Activated B cell treated with CpG ODN at 0.5 μM for 24 hours (primary cell): ENCODE measurements at regions of chr12 and their contacts with region 1.

Region 1: DNA sequence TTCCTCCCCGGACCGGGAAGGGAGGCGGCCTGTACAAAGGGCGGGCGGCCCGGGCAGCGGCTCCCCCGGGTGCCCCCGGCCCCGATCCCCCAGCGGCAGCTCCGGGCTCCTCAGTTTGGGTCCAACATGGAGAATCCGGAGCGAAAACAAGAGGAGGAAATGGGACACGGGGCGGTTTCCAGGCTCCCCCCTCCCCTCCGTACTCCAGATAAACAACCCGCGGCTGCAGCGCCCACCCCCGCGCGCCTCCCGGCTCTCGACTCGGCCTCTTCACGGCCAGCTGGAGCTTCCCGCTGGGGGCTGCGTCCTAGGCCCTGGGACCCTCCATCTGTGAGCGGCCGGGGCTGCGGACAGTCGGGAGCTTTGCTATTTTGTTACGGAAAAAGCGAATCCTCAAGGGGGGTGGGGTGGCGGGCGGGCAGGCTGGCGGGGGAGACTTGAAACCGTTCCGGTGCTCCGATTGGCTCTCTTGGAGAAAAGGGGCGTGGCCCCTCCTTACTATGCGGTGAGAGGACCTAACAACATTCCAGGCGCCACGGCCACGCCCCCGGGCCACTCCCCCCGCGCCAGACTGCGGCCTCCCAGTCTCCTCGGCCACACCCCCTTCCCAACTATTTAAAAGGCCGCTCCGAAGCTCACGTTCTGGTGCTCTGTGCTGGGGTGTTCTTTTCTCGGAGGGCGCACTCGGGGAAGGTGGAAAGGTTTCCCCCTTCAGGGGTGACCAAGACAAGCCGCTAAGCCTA is at the start of gene CTDSP2:
- DNase-seq: peak; percentile 81
- ATAC-seq: peak; percentile 47
- H3K4me3 Mint-ChIP-seq: peak within 1 kb of the TSS; percentile 86
- H3K27ac Mint-ChIP-seq: peak within 1 kb of the TSS; percentile 85
- H3K4me1 Mint-ChIP-seq: peaks cover 45% of the 10 kb centered on the region
- H3K27me3 Mint-ChIP-seq: peaks cover 8% of the 10 kb centered on the region
- CTCF ChIP-seq: no peak
- total RNA-seq, gene CTDSP2: 73.2 and 81.5 TPM in 2 replicates

Region 2: DNA sequence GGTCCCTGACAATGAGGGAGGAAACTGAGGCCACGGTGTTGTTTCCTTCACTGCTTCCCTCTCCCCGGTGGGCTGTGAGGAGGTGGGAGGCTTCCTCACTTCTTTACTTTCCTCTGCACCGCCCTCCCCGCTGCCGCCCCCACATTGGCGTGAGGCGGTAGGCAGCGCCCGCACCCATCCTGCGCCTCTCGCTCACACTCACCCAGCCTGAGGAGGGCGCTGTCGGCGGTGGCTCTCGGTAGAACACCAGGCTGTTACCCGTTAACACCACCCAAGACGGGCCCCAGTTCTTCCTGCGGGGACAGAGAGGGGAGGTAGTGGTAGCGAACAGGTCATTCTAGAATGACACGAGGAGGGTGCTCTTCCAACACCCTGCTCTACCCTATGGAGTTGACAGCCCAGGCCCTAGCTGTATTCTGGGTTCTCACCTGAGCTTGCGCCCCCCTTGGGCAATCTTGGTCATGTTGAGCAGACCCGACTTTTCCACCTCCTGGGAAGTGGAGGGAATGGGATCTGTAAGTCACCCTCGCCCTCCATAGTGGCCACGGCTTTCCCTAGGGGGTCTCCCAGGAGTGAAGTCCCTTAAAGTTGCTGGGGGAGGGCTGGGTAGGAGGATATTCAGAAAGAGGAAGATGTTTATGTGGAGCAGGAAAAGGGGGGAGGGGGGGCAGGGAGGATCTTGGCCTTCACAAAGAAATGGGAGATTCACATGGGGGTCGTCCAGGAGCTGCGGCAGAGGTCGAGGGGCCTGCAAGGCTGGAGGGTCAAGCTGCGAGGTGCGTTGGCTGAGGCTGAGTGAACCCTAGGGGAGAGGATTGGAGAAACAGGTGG is 370.4 kb before region 1 on chr12:
- CTCF ChIA-PET with region 1: no interaction called
- POLR2A ChIA-PET with region 1: no interaction called
- intact Hi-C with region 1: loop called (anchors 5 kb)
- DNase-seq: peak; percentile 54
- ATAC-seq: peak; percentile 38
- H3K4me3 Mint-ChIP-seq: peak overlapping the region; percentile 93
- H3K27ac Mint-ChIP-seq: peak overlapping the region; percentile 100
- H3K4me1 Mint-ChIP-seq: peaks cover 80% of the 10 kb centered on the region
- H3K27me3 Mint-ChIP-seq: no peaks in the 10 kb centered on the region
- CTCF ChIP-seq: no peak

Region 3: GRCh38 chr12:57782608-57783465 is 63.9 kb before region 1 on chr12 and contains the start of gene TSFM:
- CTCF ChIA-PET with region 1: no interaction called
- POLR2A ChIA-PET with region 1: interaction called, 3 read pairs
- intact Hi-C with region 1: loop called (anchors 2 kb)
- DNase-seq: peak; percentile 93
- ATAC-seq: peak; percentile 97
- H3K4me3 Mint-ChIP-seq: peak within 1 kb of the TSS; percentile 99
- H3K27ac Mint-ChIP-seq: peak within 1 kb of the TSS; percentile 97
- H3K4me1 Mint-ChIP-seq: peaks cover 22% of the 10 kb centered on the region
- H3K27me3 Mint-ChIP-seq: no peaks in the 10 kb centered on the region
- CTCF ChIP-seq: no peak
- total RNA-seq, gene TSFM: 28.4 and 33.4 TPM in 2 replicates

Region 4: DNA sequence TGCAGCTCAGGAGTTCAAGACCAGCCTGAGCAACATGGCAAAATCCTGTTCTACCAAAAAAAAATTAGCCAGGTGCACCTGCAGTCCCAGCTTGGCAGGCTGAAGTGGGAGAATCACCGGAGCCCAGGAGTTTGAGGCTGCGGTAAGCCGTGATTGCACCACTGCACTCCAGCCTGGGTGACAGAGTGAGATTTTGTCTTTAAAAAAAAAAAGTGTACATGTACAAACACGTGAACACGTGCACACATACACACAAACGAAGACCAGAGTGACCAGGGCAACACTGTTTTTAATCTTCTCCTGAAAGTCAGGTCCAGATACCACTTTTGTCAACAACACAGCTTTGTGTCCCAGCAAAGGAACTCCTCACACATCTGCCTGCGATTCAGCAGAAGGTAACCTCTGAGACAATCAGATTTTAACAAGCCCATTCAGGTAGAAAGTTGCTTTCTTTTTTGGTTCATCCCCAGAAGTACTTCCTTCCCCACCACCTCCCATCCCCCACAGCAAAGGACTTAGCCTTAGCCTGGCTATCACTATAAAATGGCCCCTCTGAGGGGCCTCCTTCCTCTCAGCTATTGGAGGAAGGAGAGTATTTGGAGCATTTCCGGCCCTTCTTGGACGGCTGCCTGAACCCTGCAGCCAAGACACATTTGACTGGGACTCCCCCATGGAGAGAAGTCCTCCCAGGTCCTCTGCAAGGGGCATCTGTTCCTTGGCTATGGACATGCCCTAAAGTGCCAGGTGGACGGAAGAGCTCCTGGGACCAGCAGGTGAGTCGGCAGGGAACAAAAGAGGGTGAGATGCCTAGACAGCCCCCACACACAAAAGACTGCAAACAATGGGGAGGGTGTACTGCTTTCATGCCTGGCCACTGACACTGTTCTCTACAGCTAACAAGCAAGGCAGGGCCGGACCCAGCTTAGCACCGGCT is 10.0 kb before region 1 on chr12:
- CTCF ChIA-PET with region 1: interaction called, 7 read pairs
- POLR2A ChIA-PET with region 1: interaction called, 46 read pairs
- intact Hi-C with region 1: loop called (anchors 1 kb)
- DNase-seq: no peak
- ATAC-seq: peak; percentile 20
- H3K4me3 Mint-ChIP-seq: peak overlapping the region; percentile 64
- H3K27ac Mint-ChIP-seq: peak overlapping the region; percentile 84
- H3K4me1 Mint-ChIP-seq: peaks cover 97% of the 10 kb centered on the region
- H3K27me3 Mint-ChIP-seq: no peaks in the 10 kb centered on the region
- CTCF ChIP-seq: no peak

Region 5: GRCh38 chr12:57865090-57865751 is 18.5 kb after region 1 on chr12:
- CTCF ChIA-PET with region 1: no interaction called
- POLR2A ChIA-PET with region 1: interaction called, 11 read pairs
- intact Hi-C with region 1: loop called (anchors 2 kb)
- DNase-seq: peak; percentile 39
- ATAC-seq: peak; percentile 86
- H3K4me3 Mint-ChIP-seq: peak overlapping the region; percentile 69
- H3K27ac Mint-ChIP-seq: no peak overlapping the region
- H3K4me1 Mint-ChIP-seq: peaks cover 8% of the 10 kb centered on the region
- H3K27me3 Mint-ChIP-seq: peaks cover 22% of the 10 kb centered on the region
- CTCF ChIP-seq: no peak